ENCODE measurements at regions of chr2 and their contacts with region 1.

Region 1: DNA sequence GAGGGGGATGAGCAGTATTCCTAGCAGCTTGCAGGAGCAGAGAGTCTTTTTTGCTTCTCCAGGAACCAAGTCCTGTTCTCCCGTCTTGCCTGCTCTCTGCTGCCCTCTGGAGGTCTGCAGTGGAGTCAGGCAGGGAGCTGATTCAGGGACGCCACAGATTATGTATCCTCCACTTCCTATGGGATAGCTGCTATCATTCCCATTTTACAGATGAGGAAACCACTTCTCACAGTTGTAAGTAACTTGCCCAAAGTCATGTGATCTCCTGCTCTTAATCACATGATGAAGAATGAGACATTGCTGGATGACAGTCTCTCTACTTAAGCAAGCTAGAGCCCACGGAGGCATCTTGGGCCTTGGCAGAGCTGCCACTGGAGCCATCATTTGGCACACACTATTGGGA is 8.3 kb downstream of the SLC4A5 start:
- DNase-seq: peak; percentile 59
- ATAC-seq: peak; percentile 89
- H3K4me3 ChIP-seq: no peak overlapping the region
- H3K27ac ChIP-seq: no peak overlapping the region
- H3K4me1 ChIP-seq: no peaks in the 10 kb centered on the region
- H3K27me3 ChIP-seq: no peaks in the 10 kb centered on the region
- CTCF ChIP-seq: peak; percentile 92
- EP300 ChIP-seq: no peak
- POLR2A ChIP-seq: no peak
- RAD21 ChIP-seq: peak; percentile 65

Region 2: GRCh38 chr2:74250189-74250631 is 84.7 kb before region 1 on chr2:
- CTCF ChIA-PET with region 1: interaction called, 25 read pairs
- POLR2A ChIA-PET with region 1: no interaction called
- in situ Hi-C with region 1: no loop called
- intact Hi-C with region 1: loop called (anchors 2 kb)
- DNase-seq: peak; percentile 41
- ATAC-seq: peak; percentile 83
- H3K4me3 ChIP-seq: no peak overlapping the region
- H3K27ac ChIP-seq: no peak overlapping the region
- H3K4me1 ChIP-seq: no peaks in the 10 kb centered on the region
- H3K27me3 ChIP-seq: peaks cover 2 to 15% of the 10 kb centered on the region in 2 experiments; a peak in 1 of 5 replicates
- CTCF ChIP-seq: peak; percentile 88
- EP300 ChIP-seq: no peak
- POLR2A ChIP-seq: no peak
- RAD21 ChIP-seq: no peak; the same call in 1 of the 2 replicates

Region 3: DNA sequence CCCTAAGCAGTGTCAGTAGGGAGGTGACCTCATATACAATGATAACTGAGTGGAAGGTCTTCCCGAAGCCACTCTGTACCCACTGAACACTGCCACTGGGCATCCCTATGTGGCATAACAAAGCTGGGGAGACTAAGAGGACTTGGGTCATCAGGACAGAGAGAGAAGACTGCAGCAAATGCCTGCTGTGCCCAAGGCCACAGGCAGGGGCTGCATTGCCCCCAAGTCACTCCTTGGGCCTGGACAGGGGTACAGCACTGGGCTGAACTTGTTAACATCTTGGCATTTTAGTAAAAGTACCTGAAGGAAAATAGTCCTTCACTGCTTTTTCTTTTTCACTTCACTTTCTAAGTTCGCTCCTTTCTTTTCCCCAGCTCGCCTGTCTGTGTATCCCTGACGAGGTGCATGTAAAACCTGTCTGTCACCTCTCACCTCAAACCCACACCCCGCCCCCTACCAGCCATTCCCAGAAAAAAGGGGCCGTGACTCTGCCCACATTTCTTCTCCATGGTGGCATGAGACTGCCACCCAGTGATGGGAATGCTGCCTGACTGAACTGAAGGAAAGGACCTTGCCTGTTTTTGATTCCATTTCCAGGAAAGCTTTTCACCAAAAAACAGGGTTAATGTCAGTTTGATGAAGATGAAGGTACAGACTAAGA is 73.6 kb before region 1 on chr2:
- CTCF ChIA-PET with region 1: interaction called, 7 read pairs
- POLR2A ChIA-PET with region 1: no interaction called
- in situ Hi-C with region 1: loop called (anchors 5 kb)
- intact Hi-C with region 1: no loop called
- DNase-seq: peak; percentile 67
- ATAC-seq: peak; percentile 79
- H3K4me3 ChIP-seq: no peak overlapping the region
- H3K27ac ChIP-seq: no peak overlapping the region
- H3K4me1 ChIP-seq: peaks cover 9% of the 10 kb centered on the region; the same call in 1 of the 2 replicates
- H3K27me3 ChIP-seq: peaks cover 3 to 19% of the 10 kb centered on the region in 2 experiments; a peak in 3 of 5 replicates
- CTCF ChIP-seq: peak; percentile 79
- EP300 ChIP-seq: no peak
- POLR2A ChIP-seq: no peak
- RAD21 ChIP-seq: peak; percentile 45; the same call in 1 of the 2 replicates

Region 4: GRCh38 chr2:74267068-74267467 is 67.9 kb before region 1 on chr2:
- CTCF ChIA-PET with region 1: interaction called, 7 read pairs
- POLR2A ChIA-PET with region 1: no interaction called
- in situ Hi-C with region 1: loop called (anchors 5 kb)
- intact Hi-C with region 1: loop called (anchors 1 kb)
- DNase-seq: peak; percentile 57
- ATAC-seq: peak; percentile 91
- H3K4me3 ChIP-seq: no peak overlapping the region
- H3K27ac ChIP-seq: no peak overlapping the region
- H3K4me1 ChIP-seq: peaks cover 6% of the 10 kb centered on the region
- H3K27me3 ChIP-seq: peaks cover 0 to 2% of the 10 kb centered on the region in 2 experiments; a peak in 3 of 5 replicates
- CTCF ChIP-seq: peak; percentile 79
- EP300 ChIP-seq: no peak
- POLR2A ChIP-seq: no peak
- RAD21 ChIP-seq: 0 out of 2 replicates have a peak, but pooled peaks have one; percentile 26

Region 5: DNA sequence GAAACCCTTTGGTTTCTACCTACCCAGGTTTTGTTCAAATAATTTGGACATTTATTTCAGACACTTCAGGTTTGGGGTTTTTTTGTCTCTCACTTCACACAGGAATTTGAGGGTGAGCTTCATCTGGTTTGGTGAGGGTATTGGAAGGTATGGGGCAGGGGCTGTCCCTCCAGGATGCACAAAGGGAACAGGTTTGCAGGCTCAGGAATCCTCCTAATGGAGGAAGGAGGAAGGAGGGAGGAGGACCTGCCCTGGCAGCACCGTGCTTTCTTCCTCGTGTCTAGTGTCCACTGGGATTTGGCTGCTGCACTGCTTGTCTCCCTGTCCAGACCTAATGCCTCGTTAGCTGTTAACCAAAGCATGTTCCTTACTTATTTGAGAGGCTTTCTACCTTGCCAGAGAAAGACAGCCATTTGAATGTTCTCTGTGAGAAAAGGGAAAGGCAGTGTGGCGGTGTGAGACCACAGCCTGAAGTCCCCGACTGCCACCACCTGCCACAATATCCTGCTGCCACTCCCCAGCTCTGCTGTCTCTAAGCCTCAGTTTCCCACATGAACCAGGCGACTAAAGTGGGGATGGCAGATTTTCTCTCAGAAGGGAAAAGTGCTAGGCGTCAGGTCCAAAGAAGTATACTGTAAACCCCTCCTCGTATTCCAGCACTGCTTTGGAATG is 10.5 kb after region 1 on chr2:
- CTCF ChIA-PET with region 1: no interaction called
- POLR2A ChIA-PET with region 1: no interaction called
- in situ Hi-C with region 1: no loop called
- intact Hi-C with region 1: no loop called
- DNase-seq: no peak
- ATAC-seq: no peak
- H3K4me3 ChIP-seq: no peak overlapping the region
- H3K27ac ChIP-seq: no peak overlapping the region
- H3K4me1 ChIP-seq: no peaks in the 10 kb centered on the region
- H3K27me3 ChIP-seq: no peaks in the 10 kb centered on the region; a peak in 1 of 5 replicates
- CTCF ChIP-seq: no peak
- EP300 ChIP-seq: no peak
- POLR2A ChIP-seq: no peak
- RAD21 ChIP-seq: no peak

Region 6: DNA sequence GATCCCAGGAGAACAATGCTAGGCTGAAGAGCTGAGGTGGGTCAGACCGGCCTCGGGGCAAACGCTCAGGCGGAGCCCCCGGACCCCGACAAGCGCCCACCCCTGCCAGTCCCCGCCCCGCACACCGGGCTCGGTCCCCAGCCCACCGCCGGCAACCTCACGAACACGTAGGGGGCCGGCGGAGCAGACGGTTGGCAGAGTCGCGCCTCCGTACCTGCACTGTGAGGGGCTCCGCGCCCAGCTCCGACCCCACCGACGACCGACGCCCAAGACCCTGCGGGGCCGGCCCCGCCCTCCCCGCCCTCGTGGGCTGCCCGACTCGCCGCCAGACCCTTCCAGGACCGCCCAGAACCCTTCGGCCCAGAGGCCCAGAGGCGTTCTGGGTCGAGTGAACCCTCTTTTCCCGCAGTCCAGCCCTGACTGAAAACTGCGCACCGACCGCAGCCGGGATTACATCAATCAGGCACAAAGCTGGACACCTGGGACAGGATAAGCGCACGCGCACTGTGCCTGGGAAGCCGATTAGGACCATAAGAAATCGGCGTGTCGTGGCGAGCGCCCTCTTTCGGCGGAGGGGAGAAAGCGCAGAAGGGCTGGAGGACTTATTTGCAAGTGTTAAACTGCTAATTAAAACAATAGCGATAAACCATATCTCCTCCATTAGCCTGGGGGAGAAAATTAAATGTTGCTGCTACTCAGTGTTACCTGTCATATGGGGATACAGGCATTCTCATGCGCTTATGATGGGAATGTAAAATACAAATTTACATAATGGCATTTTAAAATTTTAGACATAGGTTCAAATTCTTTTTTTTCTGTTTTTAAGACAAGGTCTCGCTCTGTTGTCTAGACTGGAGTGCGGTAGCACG is 56.9 kb after region 1 on chr2:
- CTCF ChIA-PET with region 1: interaction called, 6 read pairs
- POLR2A ChIA-PET with region 1: no interaction called
- in situ Hi-C with region 1: no loop called
- intact Hi-C with region 1: loop called (anchors 5 kb)
- DNase-seq: peak; percentile 91
- ATAC-seq: peak; percentile 91
- H3K4me3 ChIP-seq: peak overlapping the region; percentile 82 to 98 (median 84)
- H3K27ac ChIP-seq: peak overlapping the region; percentile 87
- H3K4me1 ChIP-seq: peaks cover 55% of the 10 kb centered on the region
- H3K27me3 ChIP-seq: peaks cover 0 to 4% of the 10 kb centered on the region in 2 experiments; a peak in 2 of 5 replicates
- CTCF ChIP-seq: peak; percentile 98
- EP300 ChIP-seq: no peak
- POLR2A ChIP-seq: peak; percentile 52 to 96
- RAD21 ChIP-seq: peak; percentile 74; the same call in 1 of the 2 replicates

Region 7: GRCh38 chr2:74587664-74588277 is 252.8 kb after region 1 on chr2:
- CTCF ChIA-PET with region 1: interaction called, 4 read pairs
- POLR2A ChIA-PET with region 1: no interaction called
- in situ Hi-C with region 1: no loop called
- intact Hi-C with region 1: loop called (anchors 2 kb)
- DNase-seq: peak; percentile 77
- ATAC-seq: peak; percentile 96
- H3K4me3 ChIP-seq: no peak overlapping the region
- H3K27ac ChIP-seq: no peak overlapping the region
- H3K4me1 ChIP-seq: peaks cover 20% of the 10 kb centered on the region
- H3K27me3 ChIP-seq: peaks cover 0 to 4% of the 10 kb centered on the region in 2 experiments; a peak in 3 of 5 replicates
- CTCF ChIP-seq: peak; percentile 94
- EP300 ChIP-seq: no peak
- POLR2A ChIP-seq: no peak
- RAD21 ChIP-seq: peak; percentile 88